Activated CD4-positive, alpha-beta memory T cell treated with anti-CD3 and anti-CD28 coated beads, Interleukin-2, amount 10 ng/mL, durations not matched to agents 7 days and 5 days (primary cell): ENCODE measurements at regions of chr11 and their contacts with region 1.

Region 1: DNA sequence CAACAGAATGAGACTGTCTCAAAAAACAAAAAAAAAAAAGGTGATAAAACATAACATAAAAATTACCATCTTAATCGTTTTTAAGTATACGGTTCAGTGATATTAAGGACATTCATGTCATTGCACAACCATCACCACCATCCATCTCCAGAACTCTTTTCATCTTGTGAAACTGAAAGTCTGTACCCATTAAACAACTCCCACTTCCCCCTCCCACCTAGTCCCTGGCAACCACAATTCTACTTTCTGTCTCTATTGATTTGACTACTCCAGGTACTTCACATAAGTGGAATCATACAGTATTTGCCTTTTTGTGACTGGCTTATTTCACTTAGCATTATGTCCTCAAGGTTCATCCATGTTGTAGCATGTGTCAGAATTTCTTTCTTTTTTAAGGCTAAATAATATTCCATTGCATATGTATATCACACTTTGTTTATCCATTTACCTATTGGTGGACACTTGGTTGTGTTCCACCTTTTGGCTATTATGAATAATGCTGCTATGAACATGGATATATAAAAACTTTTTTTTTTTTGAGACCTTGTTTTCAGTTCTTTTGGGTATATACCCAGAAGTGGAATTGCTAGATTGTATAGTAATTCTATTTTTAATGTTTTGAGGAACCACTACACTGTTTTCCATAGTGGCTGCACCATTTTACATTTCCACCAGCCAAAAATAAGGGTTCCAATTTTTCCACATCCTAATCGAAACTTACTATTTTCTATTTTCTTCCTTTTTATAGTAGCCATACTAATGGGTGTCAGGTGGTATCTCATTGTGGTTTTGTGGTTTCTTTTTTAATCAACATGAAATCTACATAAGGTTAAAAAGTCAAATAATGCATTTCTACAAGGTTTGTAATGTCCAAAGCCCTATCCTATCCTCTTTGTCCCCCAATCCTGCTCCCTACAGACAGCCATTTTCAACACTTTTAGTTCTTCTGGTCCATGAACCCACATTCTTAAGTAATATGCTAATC is 23.4 kb upstream of the PIK3C2A start:
- DNase-seq: peak; percentile 21
- H3K4me3 Mint-ChIP-seq: no peak overlapping the region
- H3K27ac Mint-ChIP-seq: no peak overlapping the region
- H3K4me1 Mint-ChIP-seq: peaks cover 14% of the 10 kb centered on the region
- H3K27me3 Mint-ChIP-seq: peaks cover 17% of the 10 kb centered on the region

Region 2: GRCh38 chr11:17244046-17244445 is 12.9 kb after region 1 on chr11:
- CTCF ChIA-PET with region 1: interaction called, 10 read pairs
- POLR2A ChIA-PET with region 1: no interaction called
- DNase-seq: no peak
- H3K4me3 Mint-ChIP-seq: no peak overlapping the region
- H3K27ac Mint-ChIP-seq: no peak overlapping the region
- H3K4me1 Mint-ChIP-seq: peaks cover 4% of the 10 kb centered on the region
- H3K27me3 Mint-ChIP-seq: peaks cover 48% of the 10 kb centered on the region

Region 3: GRCh38 chr11:17504330-17505107 is 273.4 kb after region 1 on chr11:
- CTCF ChIA-PET with region 1: interaction called, 14 read pairs
- POLR2A ChIA-PET with region 1: interaction called, 3 read pairs
- DNase-seq: peak; percentile 77
- H3K4me3 Mint-ChIP-seq: no peak overlapping the region
- H3K27ac Mint-ChIP-seq: no peak overlapping the region
- H3K4me1 Mint-ChIP-seq: no peaks in the 10 kb centered on the region
- H3K27me3 Mint-ChIP-seq: no peaks in the 10 kb centered on the region

Region 4: DNA sequence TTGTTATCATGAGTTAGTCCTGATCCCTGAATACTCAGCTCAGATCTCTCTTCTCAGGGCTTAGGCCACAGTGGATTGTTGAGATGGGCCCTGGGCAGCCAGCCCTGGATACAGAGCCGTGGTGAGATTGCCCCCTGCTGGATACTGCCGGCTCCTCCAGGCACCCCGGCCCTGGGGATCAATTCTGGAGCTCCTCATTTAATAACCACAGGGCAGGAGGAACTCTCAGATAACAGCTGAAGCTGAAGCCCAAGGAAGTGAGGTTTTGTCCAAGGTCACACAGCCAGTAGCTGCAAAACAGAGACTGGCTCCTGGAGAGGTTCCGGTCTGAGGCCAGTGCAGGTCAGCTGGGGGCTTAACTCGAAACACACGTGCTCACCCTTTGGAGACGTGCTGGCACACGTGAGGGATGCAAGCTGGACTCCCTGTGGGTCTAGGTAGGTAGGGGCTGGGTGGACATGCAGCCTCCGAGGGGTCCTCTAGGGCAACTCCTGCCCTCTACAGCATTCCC is 297.1 kb after region 1 on chr11:
- CTCF ChIA-PET with region 1: interaction called, 17 read pairs
- POLR2A ChIA-PET with region 1: no interaction called
- DNase-seq: peak; percentile 52
- H3K4me3 Mint-ChIP-seq: no peak overlapping the region
- H3K27ac Mint-ChIP-seq: no peak overlapping the region
- H3K4me1 Mint-ChIP-seq: no peaks in the 10 kb centered on the region
- H3K27me3 Mint-ChIP-seq: peaks cover 7% of the 10 kb centered on the region